Panc1 (cell line): ENCODE measurements at regions of chr10 and their contacts with region 1.

Region 1: GRCh38 chr10:62934258-62934657 is 118.1 kb upstream of the EGR2 start:
- DNase-seq: no peak
- ATAC-seq: no peak
- H3K4me3 ChIP-seq: no peak overlapping the region
- H3K27ac ChIP-seq: no peak overlapping the region
- H3K4me1 ChIP-seq: no peaks in the 10 kb centered on the region
- H3K27me3 ChIP-seq: peaks cover 18% of the 10 kb centered on the region
- CTCF ChIP-seq: no peak

Region 2: GRCh38 chr10:61814160-61814559 is 1120.1 kb before region 1 on chr10:
- CTCF ChIA-PET with region 1: interaction called, 13 read pairs
- POLR2A ChIA-PET with region 1: no interaction called
- in situ Hi-C with region 1: no loop called
- intact Hi-C with region 1: no loop called
- DNase-seq: no peak
- ATAC-seq: no peak
- H3K4me3 ChIP-seq: no peak overlapping the region
- H3K27ac ChIP-seq: peak overlapping the region; percentile 45; the same call in 1 of the 2 replicates
- H3K4me1 ChIP-seq: no peaks in the 10 kb centered on the region
- H3K27me3 ChIP-seq: no peaks in the 10 kb centered on the region
- CTCF ChIP-seq: no peak